Transverse colon (tissue), 4 donors: ENCODE measurements at regions of chr2 and their contacts with region 1.

Region 1: GRCh38 chr2:16559278-16560067 is 106.2 kb downstream of the CYRIA start:
- DNase-seq: no peak
- H3K4me3 ChIP-seq: no peak overlapping the region
- H3K27ac ChIP-seq: no peak overlapping the region
- H3K4me1 ChIP-seq: no peaks in the 10 kb centered on the region
- H3K27me3 ChIP-seq: no peaks in the 10 kb centered on the region
- CTCF ChIP-seq: no peak
- EP300 ChIP-seq: no peak
- POLR2A ChIP-seq: no peak

Region 2: GRCh38 chr2:15560988-15561573 is 998.4 kb before region 1 on chr2 and contains the start of gene NBAS:
- in situ Hi-C with region 1: no loop called
- intact Hi-C with region 1: no loop called
- DNase-seq: peak; percentile 90
- H3K4me3 ChIP-seq: peak within 1 kb of the TSS; percentile 69 to 84 (median 76)
- H3K27ac ChIP-seq: peak within 1 kb of the TSS; percentile 76 to 82 (median 80)
- H3K4me1 ChIP-seq: peaks cover 4 to 23% (median 17%) of the 10 kb centered on the region in 4 donors
- H3K27me3 ChIP-seq: no peaks in the 10 kb centered on the region
- CTCF ChIP-seq: no peak
- EP300 ChIP-seq: no peak
- POLR2A ChIP-seq: no peak
- total RNA-seq, gene NBAS: 30.6 to 43.2 (median 34.5) TPM

Region 3: GRCh38 chr2:18178736-18179349 is 1619.4 kb after region 1 on chr2:
- in situ Hi-C with region 1: no loop called
- intact Hi-C with region 1: loop called (anchors 5 kb)
- DNase-seq: peak; percentile 13
- H3K4me3 ChIP-seq: no peak overlapping the region
- H3K27ac ChIP-seq: no peak overlapping the region
- H3K4me1 ChIP-seq: no peaks in the 10 kb centered on the region
- H3K27me3 ChIP-seq: no peaks in the 10 kb centered on the region
- CTCF ChIP-seq: peak; percentile 63 to 88 (median 77)
- EP300 ChIP-seq: no peak
- POLR2A ChIP-seq: no peak